ENCODE measurements at regions of chr3 and their contacts with region 1.

Region 1: DNA sequence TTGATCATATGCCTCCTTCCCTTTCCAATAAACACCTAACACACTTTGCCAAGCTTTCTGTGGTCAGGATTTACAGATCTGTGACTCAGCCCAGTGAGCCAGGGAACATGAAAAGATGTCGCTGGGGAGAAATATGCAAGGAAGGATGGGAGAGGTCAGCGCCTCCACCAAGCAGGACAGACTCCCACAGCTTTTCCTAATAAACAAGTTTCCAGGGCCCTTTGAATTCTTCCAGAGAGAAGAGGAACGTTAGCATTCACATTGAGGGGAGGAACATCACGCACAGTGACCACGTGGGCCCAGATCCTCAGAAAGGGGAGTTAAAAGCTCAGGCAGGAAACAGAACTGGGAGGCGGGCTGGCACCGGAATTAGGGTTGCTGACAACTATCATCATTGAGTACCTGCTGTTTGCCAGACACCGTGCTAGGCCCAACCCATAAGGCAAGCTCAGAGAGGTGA is 33.3 kb upstream of the MRPS22 start:
- DNase-seq: peak; percentile 59 to 85
- H3K4me3 ChIP-seq: no peak overlapping the region
- H3K27ac ChIP-seq: peak overlapping the region; percentile 58
- H3K4me1 ChIP-seq: peaks cover 58% of the 10 kb centered on the region
- H3K27me3 ChIP-seq: no peaks in the 10 kb centered on the region
- CTCF ChIP-seq: no peak

Region 2: DNA sequence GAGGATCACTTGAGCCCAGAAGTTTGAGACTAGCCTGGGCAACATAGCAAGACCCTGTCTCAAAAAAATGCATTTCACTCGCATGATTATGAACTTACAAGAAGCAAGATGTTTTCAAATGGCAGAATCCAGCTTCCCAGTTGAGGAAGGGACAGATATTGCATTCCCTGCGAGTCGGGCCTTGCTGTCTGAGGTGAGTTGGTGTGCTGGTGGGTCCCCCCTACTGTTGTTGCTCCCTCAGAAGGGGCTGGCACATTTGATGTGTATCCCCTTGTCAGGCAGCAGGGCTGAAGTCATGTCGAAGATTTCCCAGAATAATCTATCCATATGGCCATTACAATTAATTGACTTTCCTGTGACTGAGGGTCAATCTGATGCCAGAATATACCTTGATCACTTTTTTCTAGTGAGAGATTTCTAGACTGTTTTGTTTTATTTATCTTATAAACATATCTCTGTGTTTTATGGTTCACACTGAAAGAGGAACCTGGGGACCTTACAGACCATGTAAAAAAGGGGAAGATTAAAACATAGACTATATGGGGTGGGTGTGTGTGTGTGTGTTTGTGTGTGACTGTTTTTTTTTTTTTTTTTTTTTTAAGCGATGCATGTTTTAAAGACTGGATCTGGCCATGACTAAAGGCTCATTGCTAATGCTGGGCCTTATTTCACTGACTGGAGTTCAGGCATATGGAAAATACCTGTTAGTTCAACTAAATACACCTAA is 78.8 kb before region 1 on chr3:
- CTCF ChIA-PET with region 1: no interaction called
- POLR2A ChIA-PET with region 1: interaction called, 19 read pairs
- intact Hi-C with region 1: no loop called
- DNase-seq: no peak
- H3K4me3 ChIP-seq: no peak overlapping the region
- H3K27ac ChIP-seq: no peak overlapping the region
- H3K4me1 ChIP-seq: no peaks in the 10 kb centered on the region
- H3K27me3 ChIP-seq: no peaks in the 10 kb centered on the region
- CTCF ChIP-seq: no peak

Region 3: DNA sequence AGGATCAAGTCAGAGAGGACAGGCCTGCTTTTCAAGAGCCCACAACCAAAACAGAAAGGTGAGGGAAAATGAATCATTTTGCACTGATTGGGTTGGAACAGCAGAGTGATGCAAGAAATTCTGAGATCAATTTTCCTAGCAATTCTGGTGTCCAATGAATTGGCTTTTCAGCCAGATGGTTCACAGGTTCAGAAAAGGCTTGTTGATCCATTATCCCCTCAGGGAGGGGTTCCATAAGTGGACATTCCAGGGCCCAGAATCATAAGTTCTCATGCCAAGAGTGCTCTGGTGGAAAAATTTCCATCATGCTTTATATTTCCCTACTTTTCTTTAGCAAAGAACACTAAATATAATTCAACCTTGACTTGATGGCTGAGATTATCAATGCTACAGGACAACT is 149.6 kb after region 1 on chr3:
- CTCF ChIA-PET with region 1: no interaction called
- POLR2A ChIA-PET with region 1: no interaction called
- intact Hi-C with region 1: no loop called
- DNase-seq: no peak
- H3K4me3 ChIP-seq: no peak overlapping the region
- H3K27ac ChIP-seq: no peak overlapping the region
- H3K4me1 ChIP-seq: 0 out of 2 replicates have a peak, but pooled peaks cover 7% of the 10 kb centered on the region
- H3K27me3 ChIP-seq: no peaks in the 10 kb centered on the region
- CTCF ChIP-seq: no peak

Measured in PC-9 (cell line).